Colonic mucosa (tissue), 4 donors: ENCODE measurements at regions of chr22 and their contacts with region 1.

Region 1: GRCh38 chr22:27804470-27805297 is 3.1 kb upstream of the MN1 start:
- DNase-seq: peak; percentile 64
- H3K4me3 ChIP-seq: no peak overlapping the region
- H3K27ac ChIP-seq: no peak overlapping the region
- H3K4me1 ChIP-seq: peaks cover 6% of the 10 kb centered on the region
- H3K27me3 ChIP-seq: peaks cover 25% of the 10 kb centered on the region
- CTCF ChIP-seq: peak; percentile 55

Region 2: DNA sequence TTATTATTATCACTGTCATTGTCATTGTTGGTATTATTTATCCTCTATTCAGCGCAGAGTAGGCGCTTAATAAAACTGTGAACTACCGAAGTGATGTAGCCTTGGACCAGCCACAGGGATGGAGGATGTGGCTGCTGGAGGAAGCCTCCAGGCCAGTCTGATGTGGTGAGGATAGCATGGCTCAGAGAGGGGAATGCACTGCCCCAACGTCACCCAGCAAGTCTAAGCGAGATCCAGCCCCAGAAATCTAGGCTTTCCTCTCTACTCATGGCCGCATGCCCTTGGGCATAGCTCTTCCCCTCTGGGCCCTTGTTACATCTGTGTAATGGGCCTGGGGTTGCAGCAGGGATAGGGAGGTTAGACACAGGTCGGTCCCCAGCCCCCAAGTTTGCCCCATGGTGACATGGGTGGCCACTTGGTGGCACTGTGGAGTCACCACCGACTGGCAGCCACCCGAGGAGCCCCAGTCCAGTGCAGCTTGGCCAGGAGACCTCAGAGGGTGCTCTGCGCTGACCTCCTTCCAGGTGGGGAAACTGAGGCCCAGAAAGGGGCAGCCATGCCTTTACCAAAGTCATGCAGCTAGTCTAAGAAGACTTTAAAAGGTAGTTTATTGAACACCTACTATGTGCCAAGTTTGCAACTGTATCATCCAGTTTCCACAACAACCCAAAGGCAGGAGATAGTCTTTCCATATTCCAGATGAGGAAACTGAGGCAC is 398.9 kb before region 1 on chr22:
- intact Hi-C with region 1: loop called (anchors 2 kb)
- DNase-seq: peak; percentile 52
- H3K4me3 ChIP-seq: no peak overlapping the region
- H3K27ac ChIP-seq: no peak overlapping the region
- H3K4me1 ChIP-seq: no peaks in the 10 kb centered on the region
- H3K27me3 ChIP-seq: no peaks in the 10 kb centered on the region
- CTCF ChIP-seq: peak; percentile 63

Region 3: DNA sequence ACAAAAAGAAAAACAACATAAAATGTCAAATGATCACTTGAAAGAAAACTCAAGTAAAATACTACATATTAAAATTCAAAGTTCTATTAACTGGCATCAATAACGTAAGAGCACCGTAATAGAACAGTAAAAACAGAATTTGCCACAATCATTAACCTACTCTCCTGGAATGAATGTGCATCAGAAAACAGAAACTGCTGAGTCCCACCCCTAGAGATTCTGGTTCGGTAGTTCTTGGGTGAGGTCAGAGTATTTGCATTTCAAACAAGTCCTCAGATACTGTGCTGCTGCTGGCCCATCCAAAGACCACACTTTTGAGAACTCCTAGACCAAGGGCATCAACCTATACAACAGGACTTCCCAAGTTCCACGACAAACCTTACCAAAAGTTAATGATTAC is 90.9 kb after region 1 on chr22:
- intact Hi-C with region 1: no loop called
- DNase-seq: no peak
- H3K4me3 ChIP-seq: no peak overlapping the region
- H3K27ac ChIP-seq: no peak overlapping the region
- H3K4me1 ChIP-seq: no peaks in the 10 kb centered on the region
- H3K27me3 ChIP-seq: no peaks in the 10 kb centered on the region
- CTCF ChIP-seq: no peak